ENCODE measurements at regions of chr12 and their contacts with region 1.

Region 1: GRCh38 chr12:122322501-122322900 is 56.2 kb upstream of the VPS33A start:
- DNase-seq: no peak
- H3K4me3 ChIP-seq: no peak overlapping the region
- H3K27ac ChIP-seq: no peak overlapping the region
- H3K4me1 ChIP-seq: no peaks in the 10 kb centered on the region
- H3K27me3 ChIP-seq: no peaks in the 10 kb centered on the region
- CTCF ChIP-seq: no peak

Region 2: GRCh38 chr12:122244565-122245371 is 77.7 kb before region 1 on chr12:
- CTCF ChIA-PET with region 1: no interaction called
- dilution Hi-C with region 1: loop called (anchors 5 kb)
- in situ Hi-C with region 1: no loop called
- intact Hi-C with region 1: no loop called
- DNase-seq: no peak
- H3K4me3 ChIP-seq: no peak overlapping the region
- H3K27ac ChIP-seq: no peak overlapping the region
- H3K4me1 ChIP-seq: no peaks in the 10 kb centered on the region
- H3K27me3 ChIP-seq: no peaks in the 10 kb centered on the region
- CTCF ChIP-seq: no peak

Region 3: GRCh38 chr12:122282066-122282465 is 40.4 kb before region 1 on chr12:
- CTCF ChIA-PET with region 1: no interaction called
- dilution Hi-C with region 1: loop called (anchors 5 kb)
- in situ Hi-C with region 1: no loop called
- intact Hi-C with region 1: no loop called
- DNase-seq: peak; percentile 21
- H3K4me3 ChIP-seq: no peak overlapping the region
- H3K27ac ChIP-seq: no peak overlapping the region
- H3K4me1 ChIP-seq: no peaks in the 10 kb centered on the region
- H3K27me3 ChIP-seq: no peaks in the 10 kb centered on the region
- CTCF ChIP-seq: no peak

Region 4: DNA sequence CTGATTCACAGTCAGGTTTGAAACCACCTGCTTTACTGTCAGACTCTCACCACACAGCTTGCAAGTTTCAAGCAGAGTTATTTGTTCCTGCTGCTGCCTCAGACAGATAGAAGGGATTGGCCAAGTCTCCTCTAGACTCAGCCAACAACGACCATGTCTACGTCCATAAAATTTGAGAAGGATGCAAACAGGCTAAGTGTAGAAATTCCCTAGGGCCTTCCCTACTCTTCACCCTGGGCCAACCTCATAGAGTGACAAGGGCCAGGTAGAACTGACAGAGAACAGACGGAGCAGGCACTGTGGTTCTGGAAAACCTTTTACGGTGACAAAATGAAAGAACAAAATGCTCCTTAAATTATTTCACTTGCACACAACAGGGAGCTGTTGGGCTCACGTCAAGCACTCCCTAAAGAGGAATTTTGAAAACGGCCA is 60.4 kb after region 1 on chr12:
- CTCF ChIA-PET with region 1: no interaction called
- dilution Hi-C with region 1: loop called (anchors 5 kb)
- in situ Hi-C with region 1: no loop called
- intact Hi-C with region 1: no loop called
- DNase-seq: no peak
- H3K4me3 ChIP-seq: no peak overlapping the region
- H3K27ac ChIP-seq: no peak overlapping the region
- H3K4me1 ChIP-seq: no peaks in the 10 kb centered on the region
- H3K27me3 ChIP-seq: no peaks in the 10 kb centered on the region
- CTCF ChIP-seq: no peak